AG04449 (cell line): ENCODE measurements at regions of chr1 and their contacts with region 1.

Region 1: GRCh38 chr1:151098126-151098525 is 27.6 kb downstream of the GABPB2 start:
- DNase-seq: no peak
- H3K4me3 ChIP-seq: no peak overlapping the region
- CTCF ChIP-seq: no peak

Region 2: DNA sequence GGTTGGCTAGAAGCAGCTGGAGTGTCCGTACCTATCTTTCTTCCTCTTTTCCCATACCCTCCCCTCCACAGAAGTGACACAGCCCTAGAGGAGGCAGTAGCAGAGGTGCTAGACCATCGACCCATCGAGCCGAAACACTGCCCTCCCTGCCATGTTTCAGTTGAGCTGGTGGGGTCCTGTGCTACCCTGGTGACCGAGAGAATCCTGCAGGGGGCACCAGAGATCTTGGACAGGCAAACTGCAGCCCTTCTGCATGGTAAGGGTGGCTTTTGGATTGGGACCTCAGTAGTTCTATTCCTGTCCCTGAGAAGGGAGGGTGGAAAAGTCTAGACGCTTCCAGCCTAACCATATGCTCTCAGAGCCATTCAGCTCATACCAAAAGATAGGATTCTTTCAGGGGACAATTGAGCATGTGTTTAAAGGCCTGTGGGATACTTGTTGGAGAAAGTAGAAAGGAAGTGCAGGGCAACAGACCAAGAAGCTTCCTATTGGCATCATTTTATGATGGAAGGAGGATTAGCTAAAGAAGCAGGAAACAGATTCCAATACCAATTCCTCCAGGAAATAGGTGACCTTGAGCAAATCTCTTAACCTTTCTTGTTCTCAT is 73.5 kb before region 1 on chr1:
- CTCF ChIA-PET with region 1: interaction called, 13 read pairs
- POLR2A ChIA-PET with region 1: no interaction called
- DNase-seq: no peak
- H3K4me3 ChIP-seq: no peak overlapping the region
- CTCF ChIP-seq: peak; percentile 79

Region 3: DNA sequence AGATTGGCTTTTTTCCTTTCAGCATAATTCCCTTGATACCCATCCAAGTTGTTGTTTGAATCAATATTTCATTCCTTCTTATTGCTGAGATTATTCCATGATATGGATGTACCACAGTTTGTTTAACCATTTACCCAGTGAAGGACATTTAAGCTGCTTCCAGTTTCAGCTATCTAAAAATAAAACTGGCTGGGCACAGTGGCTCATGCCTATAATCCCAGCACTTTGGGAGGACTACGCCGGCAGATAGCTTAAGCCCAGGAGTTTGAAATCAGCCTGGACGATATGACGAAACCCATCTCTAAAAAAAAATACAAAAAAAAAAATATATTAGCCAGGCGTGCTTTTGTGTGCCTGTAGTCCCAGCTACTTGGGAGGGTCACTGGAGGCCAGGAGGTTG is 15.8 kb after region 1 on chr1:
- CTCF ChIA-PET with region 1: interaction called, 58 read pairs
- POLR2A ChIA-PET with region 1: no interaction called
- DNase-seq: no peak
- H3K4me3 ChIP-seq: no peak overlapping the region
- CTCF ChIP-seq: no peak

Region 4: DNA sequence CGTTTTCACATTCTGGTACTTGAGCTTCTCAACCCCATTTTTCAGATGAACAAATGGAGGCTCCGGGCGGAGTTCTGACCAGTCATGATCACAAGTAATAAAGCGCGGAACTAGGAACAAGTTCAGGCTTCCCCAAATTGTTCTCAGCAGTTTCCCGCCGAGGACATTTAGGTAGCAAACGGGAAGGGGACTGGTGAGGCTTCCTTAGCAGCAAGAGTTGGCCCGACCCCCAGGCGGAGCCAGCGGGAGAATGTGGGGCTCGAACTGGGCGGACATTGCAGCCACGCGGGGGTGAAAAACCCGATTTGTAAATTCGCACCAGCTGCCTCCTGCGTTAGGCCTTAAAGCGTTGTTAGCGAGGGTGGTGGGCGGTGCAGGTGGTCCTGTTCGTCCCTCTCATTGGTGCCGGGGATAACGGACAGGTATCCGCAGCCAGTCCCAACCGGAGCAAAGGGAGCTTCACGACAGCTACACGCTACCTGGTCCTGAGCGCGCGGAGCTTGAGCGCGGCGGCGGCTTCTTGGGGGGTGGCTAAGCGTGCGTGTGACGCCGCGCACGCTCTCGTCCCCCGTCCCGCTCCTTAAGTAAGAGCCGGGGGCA is 33.0 kb after region 1 on chr1:
- CTCF ChIA-PET with region 1: interaction called, 16 read pairs
- POLR2A ChIA-PET with region 1: no interaction called
- DNase-seq: peak; percentile 17
- H3K4me3 ChIP-seq: peak overlapping the region; percentile 44
- CTCF ChIP-seq: no peak

Region 5: GRCh38 chr1:151254217-151255213 is 156.4 kb after region 1 on chr1 and contains the start of gene PSMD4:
- CTCF ChIA-PET with region 1: interaction called, 16 read pairs
- POLR2A ChIA-PET with region 1: no interaction called
- DNase-seq: peak; percentile 81
- H3K4me3 ChIP-seq: peak within 1 kb of the TSS; percentile 80
- CTCF ChIP-seq: peak; percentile 7